CD8-positive, alpha-beta T cell (primary cell): ENCODE measurements at regions of chr10 and their contacts with region 1.

Region 1: DNA sequence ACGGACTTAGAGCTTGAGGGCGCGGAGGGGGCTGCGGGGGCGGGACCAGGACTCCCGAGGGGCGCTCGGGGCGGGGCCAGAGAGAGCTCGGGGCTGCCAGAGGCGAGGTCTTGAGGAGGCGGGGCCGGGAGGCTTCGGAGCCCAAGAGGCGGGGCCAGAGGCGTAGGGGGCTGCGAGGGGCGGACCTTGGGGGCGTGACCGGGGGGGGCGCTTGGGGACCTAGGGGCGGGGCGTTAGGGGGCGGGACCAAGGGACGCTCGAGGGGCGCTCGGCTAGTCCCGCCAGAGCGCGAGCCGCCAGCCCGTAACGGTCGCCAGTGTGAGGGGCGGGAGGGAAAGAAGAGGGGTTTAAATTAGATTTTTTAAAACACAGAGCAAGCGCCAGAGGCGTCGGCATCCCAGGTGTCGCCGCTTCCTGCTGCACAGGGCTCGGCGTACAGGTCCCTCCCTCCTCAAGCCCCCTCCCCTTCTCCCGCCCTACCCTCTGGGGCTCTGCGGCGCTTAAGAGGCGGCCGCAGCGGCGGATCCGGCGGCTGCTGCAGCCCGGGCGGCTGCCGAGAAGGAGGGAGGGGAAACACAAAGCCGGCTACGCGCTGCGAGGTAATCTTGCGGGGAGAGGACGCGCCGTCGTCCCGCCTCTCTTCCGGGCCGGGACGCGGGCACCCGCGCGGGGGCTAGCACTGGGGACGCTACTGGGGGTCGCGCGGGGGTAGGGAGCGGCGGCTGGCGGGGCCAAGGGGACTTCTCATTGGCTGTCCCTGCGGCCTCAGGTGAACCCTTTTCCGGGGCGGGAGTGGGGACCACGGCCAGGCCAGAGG is at the start of gene ADD3:
- DNase-seq: peak; percentile 86 to 97 (median 95)
- ATAC-seq: peak; percentile 71
- H3K4me3 ChIP-seq: peak within 1 kb of the TSS; percentile 85 to 86
- H3K4me3 Mint-ChIP-seq: no peak within 1 kb of the TSS
- H3K27ac ChIP-seq: peak within 1 kb of the TSS; percentile 77 to 82
- H3K27ac Mint-ChIP-seq: peak within 1 kb of the TSS; percentile 92
- H3K4me1 ChIP-seq: peaks cover 34% of the 10 kb centered on the region
- H3K4me1 Mint-ChIP-seq: peaks cover 42% of the 10 kb centered on the region
- H3K27me3 ChIP-seq: no peaks in the 10 kb centered on the region
- H3K27me3 Mint-ChIP-seq: no peaks in the 10 kb centered on the region
- CTCF ChIP-seq: no peak
- total RNA-seq, gene ADD3: 135 to 148 TPM

Region 2: DNA sequence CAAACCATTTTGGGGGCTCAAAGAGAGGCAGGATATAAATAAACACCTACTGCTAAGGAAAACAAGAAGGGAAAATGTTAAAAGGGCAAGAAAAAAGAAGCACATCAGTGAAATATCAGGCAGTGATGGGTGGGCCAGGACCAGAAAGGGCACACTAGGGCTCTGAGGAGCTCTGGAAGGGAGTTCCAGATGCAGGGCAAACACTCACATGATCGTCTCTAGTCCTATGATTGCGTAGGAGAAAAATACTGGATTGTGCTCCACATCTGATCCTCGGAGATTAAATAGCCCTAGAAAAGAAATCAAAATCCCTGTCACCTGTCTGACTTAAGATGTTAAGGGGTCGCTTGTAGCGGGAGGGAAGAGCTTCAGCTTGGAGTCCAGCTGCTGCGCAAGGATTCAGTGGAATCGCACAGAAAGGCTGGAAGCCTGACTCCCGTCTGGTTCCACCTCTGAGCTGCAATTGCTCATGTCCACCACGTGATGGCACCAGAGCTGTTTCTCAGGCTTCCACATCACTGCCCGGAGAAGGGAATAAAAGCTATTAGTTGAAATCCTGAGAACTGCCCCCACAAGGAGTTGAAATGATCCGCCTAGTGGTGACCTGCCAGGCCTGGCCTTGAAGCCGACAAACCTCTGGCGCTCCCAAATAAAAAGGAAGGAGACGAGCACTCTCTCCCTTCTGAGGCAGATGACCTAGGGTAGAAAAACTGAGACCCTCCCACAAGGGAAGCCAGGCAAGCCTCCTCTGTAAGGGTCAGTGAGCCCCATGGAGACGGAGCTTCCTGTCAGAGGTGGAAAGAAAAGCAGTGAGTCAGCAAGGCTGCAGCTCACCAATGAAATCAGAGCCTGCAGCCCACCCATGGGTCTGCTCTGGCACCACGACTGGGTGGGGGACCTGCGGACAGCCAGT is 123.8 kb before region 1 on chr10:
- CTCF ChIA-PET with region 1: interaction called, 12 read pairs
- POLR2A ChIA-PET with region 1: interaction called, 4 read pairs
- intact Hi-C with region 1: loop called in 1 of 2 experiments (anchors 2 kb)
- DNase-seq: peak; percentile 22 to 80 (median 63)
- ATAC-seq: peak; percentile 94
- H3K4me3 ChIP-seq: no peak overlapping the region
- H3K4me3 Mint-ChIP-seq: no peak overlapping the region
- H3K27ac ChIP-seq: no peak overlapping the region
- H3K27ac Mint-ChIP-seq: no peak overlapping the region
- H3K4me1 ChIP-seq: no peaks in the 10 kb centered on the region
- H3K4me1 Mint-ChIP-seq: peaks cover 4% of the 10 kb centered on the region
- H3K27me3 ChIP-seq: no peaks in the 10 kb centered on the region
- H3K27me3 Mint-ChIP-seq: no peaks in the 10 kb centered on the region
- CTCF ChIP-seq: peak; percentile 99

Region 3: GRCh38 chr10:109978481-109978880 is 29.4 kb before region 1 on chr10:
- CTCF ChIA-PET with region 1: interaction called, 19 read pairs
- POLR2A ChIA-PET with region 1: no interaction called
- intact Hi-C with region 1: loop called in 1 of 2 experiments (anchors 2 kb)
- DNase-seq: peak; percentile 31 to 75 (median 71)
- ATAC-seq: peak; percentile 70
- H3K4me3 ChIP-seq: no peak overlapping the region
- H3K4me3 Mint-ChIP-seq: no peak overlapping the region
- H3K27ac ChIP-seq: no peak overlapping the region
- H3K27ac Mint-ChIP-seq: no peak overlapping the region
- H3K4me1 ChIP-seq: peaks cover 7% of the 10 kb centered on the region
- H3K4me1 Mint-ChIP-seq: peaks cover 16% of the 10 kb centered on the region
- H3K27me3 ChIP-seq: no peaks in the 10 kb centered on the region
- H3K27me3 Mint-ChIP-seq: no peaks in the 10 kb centered on the region
- CTCF ChIP-seq: peak; percentile 91

Region 4: DNA sequence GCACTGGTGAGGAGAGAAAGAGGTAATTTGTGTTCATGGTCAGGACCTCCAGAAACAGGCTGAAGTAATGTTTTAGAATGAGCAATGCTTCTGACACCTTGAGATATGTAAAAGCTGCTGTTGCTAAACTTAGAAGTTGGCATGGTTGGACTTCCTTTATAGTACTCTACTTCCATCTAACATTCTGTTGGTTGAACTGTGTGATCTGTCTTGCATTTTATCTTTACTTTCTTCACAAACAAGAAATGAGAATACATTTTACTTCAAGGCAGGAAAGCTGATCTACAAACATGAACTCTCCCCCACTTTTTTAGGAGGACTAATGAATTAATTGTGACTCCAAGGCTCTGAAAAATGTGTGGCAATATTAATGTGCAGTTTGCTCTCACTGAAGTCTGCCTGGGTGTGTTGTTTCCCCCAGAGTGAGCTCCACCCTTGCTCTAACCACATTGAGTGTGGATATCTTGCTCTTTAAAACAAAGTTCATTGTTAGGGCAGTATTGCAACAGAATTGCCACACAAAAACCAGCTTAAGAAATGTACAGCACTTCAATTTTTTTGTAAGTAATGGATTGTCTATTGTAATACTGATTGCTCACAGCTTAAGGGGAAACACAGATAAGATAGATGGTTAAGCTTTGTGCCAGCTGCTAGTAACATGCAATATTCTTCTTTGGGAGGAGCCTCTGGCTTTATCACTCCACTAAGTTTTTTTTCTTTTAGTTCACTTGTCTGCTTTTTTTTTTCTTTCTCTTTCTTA is 68.8 kb after region 1 on chr10:
- CTCF ChIA-PET with region 1: interaction called, 3 read pairs
- POLR2A ChIA-PET with region 1: interaction called, 24 read pairs
- intact Hi-C with region 1: loop called (anchors 1 to 5 kb)
- DNase-seq: peak in 5 of 9 experiments; percentile 31 to 71 (median 50)
- ATAC-seq: peak; percentile 65
- H3K4me3 ChIP-seq: peak overlapping the region; percentile 17 to 39
- H3K4me3 Mint-ChIP-seq: peak overlapping the region; percentile 79
- H3K27ac ChIP-seq: peak overlapping the region; percentile 48 to 76
- H3K27ac Mint-ChIP-seq: peak overlapping the region; percentile 96
- H3K4me1 ChIP-seq: peaks cover 83% of the 10 kb centered on the region
- H3K4me1 Mint-ChIP-seq: peaks cover 86% of the 10 kb centered on the region
- H3K27me3 ChIP-seq: no peaks in the 10 kb centered on the region
- H3K27me3 Mint-ChIP-seq: no peaks in the 10 kb centered on the region
- CTCF ChIP-seq: no peak

Region 5: GRCh38 chr10:110210674-110211464 is 203.0 kb after region 1 on chr10:
- CTCF ChIA-PET with region 1: no interaction called
- POLR2A ChIA-PET with region 1: interaction called, 3 read pairs
- intact Hi-C with region 1: loop called (anchors 1 to 5 kb)
- DNase-seq: peak; percentile 77 to 94 (median 90)
- ATAC-seq: peak; percentile 48
- H3K4me3 ChIP-seq: peak overlapping the region; percentile 59 to 91
- H3K4me3 Mint-ChIP-seq: peak overlapping the region; percentile 94
- H3K27ac ChIP-seq: peak overlapping the region; percentile 60 to 90
- H3K27ac Mint-ChIP-seq: peak overlapping the region; percentile 99
- H3K4me1 ChIP-seq: peaks cover 22% of the 10 kb centered on the region
- H3K4me1 Mint-ChIP-seq: peaks cover 47% of the 10 kb centered on the region
- H3K27me3 ChIP-seq: peaks cover 0 to 13% of the 10 kb centered on the region in 2 experiments
- H3K27me3 Mint-ChIP-seq: peaks cover 17% of the 10 kb centered on the region
- CTCF ChIP-seq: no peak

Region 6: GRCh38 chr10:110414563-110415309 is 406.8 kb after region 1 on chr10:
- CTCF ChIA-PET with region 1: no interaction called
- POLR2A ChIA-PET with region 1: no interaction called
- intact Hi-C with region 1: loop called in 1 of 2 experiments (anchors 5 kb)
- DNase-seq: peak; percentile 66 to 97 (median 86)
- ATAC-seq: peak; percentile 95
- H3K4me3 ChIP-seq: no peak overlapping the region
- H3K4me3 Mint-ChIP-seq: peak overlapping the region; percentile 33
- H3K27ac ChIP-seq: peak overlapping the region in 1 of 2 experiments; percentile 38
- H3K27ac Mint-ChIP-seq: peak overlapping the region; percentile 82
- H3K4me1 ChIP-seq: peaks cover 26% of the 10 kb centered on the region
- H3K4me1 Mint-ChIP-seq: peaks cover 29% of the 10 kb centered on the region
- H3K27me3 ChIP-seq: no peaks in the 10 kb centered on the region
- H3K27me3 Mint-ChIP-seq: peaks cover 2% of the 10 kb centered on the region
- CTCF ChIP-seq: no peak

Region 7: GRCh38 chr10:110864662-110865140 is 856.8 kb after region 1 on chr10:
- CTCF ChIA-PET with region 1: no interaction called
- POLR2A ChIA-PET with region 1: no interaction called
- intact Hi-C with region 1: loop called in 1 of 2 experiments (anchors 5 kb)
- DNase-seq: peak in 7 of 9 experiments; percentile 45 to 96 (median 62)
- ATAC-seq: peak; percentile 63
- H3K4me3 ChIP-seq: peak overlapping the region; percentile 5 to 18
- H3K4me3 Mint-ChIP-seq: peak overlapping the region; percentile 78
- H3K27ac ChIP-seq: peak overlapping the region; percentile 77 to 97
- H3K27ac Mint-ChIP-seq: peak overlapping the region; percentile 98
- H3K4me1 ChIP-seq: peaks cover 99% of the 10 kb centered on the region
- H3K4me1 Mint-ChIP-seq: peaks cover 98% of the 10 kb centered on the region
- H3K27me3 ChIP-seq: no peaks in the 10 kb centered on the region
- H3K27me3 Mint-ChIP-seq: no peaks in the 10 kb centered on the region
- CTCF ChIP-seq: no peak